AG04450 (cell line): ENCODE measurements at regions of chr2 and their contacts with region 1.

Region 1: GRCh38 chr2:176653479-176654443 is 384.5 kb downstream of the MTX2 start:
- DNase-seq: peak; percentile 4
- H3K4me3 ChIP-seq: no peak overlapping the region
- H3K27ac ChIP-seq: no peak overlapping the region
- H3K27me3 ChIP-seq: peaks cover 4% of the 10 kb centered on the region
- CTCF ChIP-seq: peak; percentile 75

Region 2: GRCh38 chr2:176126929-176127773 is 526.6 kb before region 1 on chr2:
- CTCF ChIA-PET with region 1: interaction called, 184 read pairs
- POLR2A ChIA-PET with region 1: no interaction called
- DNase-seq: peak; percentile 29
- H3K4me3 ChIP-seq: no peak overlapping the region
- H3K27ac ChIP-seq: no peak overlapping the region
- H3K27me3 ChIP-seq: peaks cover 84% of the 10 kb centered on the region
- CTCF ChIP-seq: peak; percentile 83

Region 3: DNA sequence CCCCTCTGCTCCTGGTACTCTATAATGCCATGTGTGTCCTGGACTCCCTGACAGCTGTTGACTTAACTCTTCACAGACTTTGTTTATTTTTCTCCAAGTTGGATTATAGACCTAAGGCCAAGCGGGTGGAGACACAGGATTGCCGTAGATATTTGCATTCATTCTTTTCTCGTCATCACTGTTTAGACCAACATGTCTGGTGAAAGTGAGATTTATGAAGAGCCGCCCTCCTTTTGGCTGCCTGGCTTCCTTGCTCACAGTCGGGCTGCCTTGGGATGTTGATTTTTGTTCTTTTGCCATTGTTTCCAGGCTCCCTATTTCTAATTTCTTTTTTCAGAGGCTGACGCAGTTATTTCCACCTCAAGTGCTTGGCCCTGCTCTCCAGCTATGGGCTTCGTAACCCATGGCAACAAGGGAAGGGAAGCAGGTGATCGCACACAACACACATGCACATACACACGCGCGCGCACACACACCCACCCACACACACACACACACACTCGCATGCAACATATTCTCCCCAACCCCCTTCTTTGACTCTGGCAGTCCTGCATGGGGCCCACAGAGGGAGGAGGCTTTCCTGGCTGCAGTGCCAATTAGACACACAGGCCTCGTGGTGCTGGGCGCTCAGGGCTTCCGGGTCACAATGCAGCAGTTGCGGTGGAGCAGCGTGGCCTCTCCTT is 88.0 kb before region 1 on chr2:
- CTCF ChIA-PET with region 1: interaction called, 13 read pairs
- POLR2A ChIA-PET with region 1: no interaction called
- DNase-seq: no peak
- H3K4me3 ChIP-seq: no peak overlapping the region
- H3K27ac ChIP-seq: peak overlapping the region; percentile 39
- H3K27me3 ChIP-seq: no peaks in the 10 kb centered on the region
- CTCF ChIP-seq: no peak

Region 4: DNA sequence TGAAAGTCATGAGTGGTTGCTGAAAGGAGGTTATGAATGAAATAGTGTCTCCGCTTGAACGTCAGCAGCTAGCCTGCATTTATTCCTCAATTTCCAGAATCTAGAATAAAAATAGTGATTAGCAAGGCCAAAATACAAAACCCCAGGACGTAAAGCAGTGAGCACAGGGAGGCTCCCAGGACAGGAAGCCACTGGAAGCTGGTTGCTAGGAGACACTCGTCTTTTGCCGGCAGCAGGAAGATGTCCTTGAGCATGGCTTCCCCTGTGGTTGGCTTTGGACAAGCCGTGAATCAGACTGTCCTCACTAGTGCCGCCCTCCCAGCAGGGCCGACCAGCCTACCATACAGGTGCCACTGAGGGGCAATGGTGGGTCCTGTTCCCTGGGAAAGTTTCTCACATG is 10.1 kb before region 1 on chr2:
- CTCF ChIA-PET with region 1: interaction called, 71 read pairs
- POLR2A ChIA-PET with region 1: no interaction called
- DNase-seq: no peak
- H3K4me3 ChIP-seq: no peak overlapping the region
- H3K27ac ChIP-seq: no peak overlapping the region
- H3K27me3 ChIP-seq: no peaks in the 10 kb centered on the region
- CTCF ChIP-seq: no peak

Region 5: DNA sequence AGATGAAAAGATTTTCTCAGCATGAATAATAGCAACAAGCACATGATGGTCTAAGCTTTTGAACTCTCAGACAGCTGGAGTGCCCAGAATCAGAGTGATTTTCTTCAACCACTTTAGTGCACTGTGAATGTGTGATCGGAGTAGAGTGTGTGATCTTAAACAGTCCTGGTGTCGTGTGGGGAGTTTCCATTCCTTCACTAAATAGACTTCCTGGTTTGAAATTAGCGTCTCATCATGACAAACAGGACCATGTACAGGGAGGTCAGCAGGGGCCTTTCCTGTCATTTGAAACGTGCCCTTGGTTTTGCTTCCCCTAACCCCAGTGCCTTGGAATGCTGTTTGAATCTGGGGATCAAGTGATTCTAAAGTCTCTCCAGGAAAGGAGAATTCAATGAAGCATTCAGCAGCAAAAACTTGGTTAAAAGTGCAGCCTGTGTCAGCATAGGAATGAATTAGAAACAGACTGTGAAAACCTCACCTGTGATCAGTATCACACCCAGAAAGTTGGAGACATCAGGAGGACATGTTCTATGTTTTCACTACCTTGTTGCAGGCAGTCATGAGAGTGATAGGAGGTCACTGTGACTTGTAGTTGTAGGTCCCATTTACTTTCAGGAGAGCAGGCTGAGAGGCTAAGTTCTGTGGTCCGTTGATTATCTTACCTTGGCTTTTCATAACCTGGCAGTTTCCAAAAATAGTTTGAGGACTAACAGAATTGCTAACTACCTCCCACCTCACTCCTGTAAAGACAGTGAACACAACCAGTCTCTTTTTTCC is 15.8 kb after region 1 on chr2:
- CTCF ChIA-PET with region 1: interaction called, 61 read pairs
- POLR2A ChIA-PET with region 1: no interaction called
- DNase-seq: no peak
- H3K4me3 ChIP-seq: no peak overlapping the region
- H3K27ac ChIP-seq: no peak overlapping the region
- H3K27me3 ChIP-seq: no peaks in the 10 kb centered on the region
- CTCF ChIP-seq: no peak

Region 6: DNA sequence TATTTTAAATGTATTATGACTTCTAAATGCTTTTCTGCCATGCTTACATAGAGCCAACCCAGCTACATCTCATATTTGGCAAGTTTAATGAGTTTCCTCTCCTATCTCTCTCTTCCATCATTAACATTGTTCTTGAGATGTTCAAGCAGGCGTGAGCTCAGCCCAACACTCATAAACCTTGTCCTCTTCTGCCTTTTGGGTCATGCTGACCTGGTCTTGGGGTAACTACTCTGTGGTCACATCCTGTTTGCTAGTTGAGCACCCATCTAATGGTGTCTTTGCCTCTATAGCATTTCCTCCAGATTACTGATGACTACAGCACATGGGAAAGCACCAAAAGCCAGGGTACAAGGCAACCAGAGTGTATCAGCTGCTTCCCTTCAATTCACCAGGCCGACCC is 191.9 kb after region 1 on chr2:
- CTCF ChIA-PET with region 1: no interaction called
- POLR2A ChIA-PET with region 1: no interaction called
- DNase-seq: no peak
- H3K4me3 ChIP-seq: no peak overlapping the region
- H3K27ac ChIP-seq: no peak overlapping the region
- H3K27me3 ChIP-seq: no peaks in the 10 kb centered on the region
- CTCF ChIP-seq: no peak

Region 7: DNA sequence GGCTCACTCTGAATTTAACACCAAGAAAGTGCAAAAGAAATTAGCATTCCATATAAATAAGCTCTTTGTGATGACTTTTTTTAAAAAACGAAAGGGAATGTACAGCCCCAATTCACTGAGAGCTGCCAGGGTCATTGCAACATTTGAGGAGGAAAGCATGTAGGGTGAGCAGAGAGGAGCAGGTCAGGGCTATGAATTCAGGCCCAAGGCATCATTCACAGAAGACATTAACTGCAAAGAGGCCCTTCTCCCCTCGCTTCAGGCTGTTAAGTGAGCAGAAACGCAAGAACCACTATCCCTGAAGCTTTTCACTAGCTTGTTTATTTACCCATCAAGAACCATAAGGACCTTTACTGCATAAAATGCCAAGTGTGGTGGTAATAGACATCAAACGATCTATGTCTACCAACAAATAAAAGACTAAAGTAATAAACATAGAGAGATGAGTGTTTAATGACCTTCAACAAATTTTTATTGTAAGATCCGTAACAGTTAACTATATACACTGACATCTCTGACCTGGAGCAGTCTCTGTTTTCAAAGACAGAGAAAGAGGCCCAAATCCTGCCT is 225.8 kb after region 1 on chr2:
- CTCF ChIA-PET with region 1: interaction called, 12 read pairs
- POLR2A ChIA-PET with region 1: no interaction called
- DNase-seq: no peak
- H3K4me3 ChIP-seq: no peak overlapping the region
- H3K27ac ChIP-seq: no peak overlapping the region
- H3K27me3 ChIP-seq: no peaks in the 10 kb centered on the region
- CTCF ChIP-seq: no peak

Region 8: GRCh38 chr2:177296040-177296439 is 642.3 kb after region 1 on chr2:
- CTCF ChIA-PET with region 1: interaction called, 12 read pairs
- POLR2A ChIA-PET with region 1: no interaction called
- DNase-seq: no peak
- H3K4me3 ChIP-seq: no peak overlapping the region
- H3K27ac ChIP-seq: no peak overlapping the region
- H3K27me3 ChIP-seq: no peaks in the 10 kb centered on the region
- CTCF ChIP-seq: peak; percentile 36